Activated CD4-positive, alpha-beta T cell treated with anti-CD3 and anti-CD28 coated beads for 36 hours (primary cell): ENCODE measurements at regions of chr15 and their contacts with region 1.

Region 1: DNA sequence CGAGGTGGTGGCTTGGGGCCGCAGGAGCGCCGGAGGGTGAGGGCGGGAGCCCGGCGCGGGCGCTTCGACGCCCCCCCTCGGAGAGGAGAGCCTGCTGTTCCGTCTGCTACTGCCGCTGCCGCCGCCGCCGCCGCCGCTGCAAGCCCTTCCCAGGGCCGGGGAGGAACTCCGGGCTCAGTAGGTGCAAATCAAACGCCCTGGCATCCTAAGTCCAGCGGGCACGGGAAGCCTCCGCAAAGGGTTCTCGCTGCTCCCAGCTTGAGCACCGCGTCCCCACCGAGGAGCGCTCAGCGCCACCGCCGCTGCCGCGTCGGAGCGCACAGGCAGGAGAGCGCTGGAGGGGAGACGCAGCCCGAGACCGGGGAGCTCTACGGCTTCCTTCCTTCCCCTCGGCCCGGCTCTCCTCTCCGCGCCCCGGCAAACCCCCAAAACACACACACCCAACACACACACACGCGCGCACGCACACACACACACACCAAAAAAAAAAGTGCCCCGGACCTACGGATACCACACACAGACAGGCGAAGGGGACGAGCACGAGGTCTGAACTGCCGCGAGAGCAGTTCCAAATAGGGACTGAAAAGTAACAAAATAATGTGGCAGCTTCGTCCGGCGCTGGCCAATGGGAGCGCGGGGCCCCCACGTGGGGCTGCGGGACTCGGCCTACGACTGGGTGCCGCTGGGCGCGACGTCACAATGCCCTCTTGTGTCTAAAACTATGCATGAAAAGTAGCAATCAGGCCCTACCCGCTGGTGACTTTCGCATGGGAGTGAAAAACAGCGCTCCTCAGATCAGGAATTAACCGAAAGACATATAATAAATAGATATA is at the start of gene TLE3:
- DNase-seq: peak; percentile 99
- ATAC-seq: peak; percentile 68
- H3K4me3 Mint-ChIP-seq: peak within 1 kb of the TSS; percentile 93
- H3K27ac Mint-ChIP-seq: peak within 1 kb of the TSS; percentile 95
- H3K4me1 Mint-ChIP-seq: peaks cover 41% of the 10 kb centered on the region
- H3K27me3 Mint-ChIP-seq: peaks cover 5% of the 10 kb centered on the region
- total RNA-seq, gene TLE3: 89.2 to 97.6 TPM

Region 2: DNA sequence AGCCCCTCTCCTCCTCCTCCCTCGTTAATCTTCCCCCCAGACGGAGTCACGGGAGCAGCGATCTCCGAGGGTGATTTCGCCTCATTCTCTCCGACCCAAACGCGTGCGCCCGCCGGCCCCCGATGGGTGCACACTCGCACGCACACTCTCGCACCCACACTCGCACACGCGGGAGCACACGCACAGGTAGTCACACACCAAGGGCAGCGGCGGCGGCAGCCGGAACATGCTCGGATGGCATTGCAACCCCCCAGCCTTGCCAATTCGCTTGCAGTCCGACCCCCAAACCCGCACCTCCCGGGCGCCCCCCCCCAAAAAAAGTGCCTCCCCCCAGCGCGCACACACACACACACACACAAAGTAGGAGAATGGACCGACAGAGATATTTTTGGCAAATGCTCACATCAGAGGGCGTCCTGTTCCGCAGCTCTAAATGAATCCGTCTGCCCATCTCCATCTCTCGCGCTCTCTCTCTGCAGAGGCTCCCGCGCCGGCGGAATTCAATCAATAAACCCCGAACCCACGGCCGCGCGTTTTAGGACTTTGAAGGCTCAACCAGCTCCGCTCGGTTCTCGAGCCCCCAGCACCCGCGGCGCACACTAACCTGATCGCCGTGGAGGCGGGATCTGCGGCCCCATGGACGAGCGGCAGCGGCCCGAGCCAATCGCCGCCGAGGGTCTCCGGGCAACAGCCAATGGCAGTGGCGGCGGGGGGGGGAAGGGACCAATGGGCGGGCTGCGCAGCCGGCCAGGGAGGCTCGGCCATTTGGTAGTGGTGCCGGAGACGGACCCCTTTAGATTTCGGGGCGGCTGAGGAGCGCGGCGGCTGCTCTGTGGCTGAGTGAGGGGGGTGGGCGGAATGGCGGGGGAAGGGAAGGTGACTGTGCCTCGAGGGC is 1277.0 kb before region 1 on chr15 and contains the start of gene ANP32A:
- CTCF ChIA-PET with region 1: no interaction called
- POLR2A ChIA-PET with region 1: no interaction called
- intact Hi-C with region 1: loop called in 1 of 2 experiments (anchors 5 kb)
- DNase-seq: peak; percentile 98
- ATAC-seq: peak; percentile 76
- H3K4me3 Mint-ChIP-seq: peak within 1 kb of the TSS; percentile 99
- H3K27ac Mint-ChIP-seq: peak within 1 kb of the TSS; percentile 98
- H3K4me1 Mint-ChIP-seq: peaks cover 26% of the 10 kb centered on the region
- H3K27me3 Mint-ChIP-seq: no peaks in the 10 kb centered on the region
- total RNA-seq, gene ANP32A: 252 to 439 TPM

Region 3: GRCh38 chr15:69462493-69463181 is 634.9 kb before region 1 on chr15:
- CTCF ChIA-PET with region 1: interaction called, 3 read pairs
- POLR2A ChIA-PET with region 1: interaction called, 10 read pairs
- intact Hi-C with region 1: loop called in 1 of 2 experiments (anchors 5 kb)
- DNase-seq: peak; percentile 95
- ATAC-seq: peak; percentile 94
- H3K4me3 Mint-ChIP-seq: peak overlapping the region; percentile 82
- H3K27ac Mint-ChIP-seq: peak overlapping the region; percentile 89
- H3K4me1 Mint-ChIP-seq: peaks cover 25% of the 10 kb centered on the region
- H3K27me3 Mint-ChIP-seq: no peaks in the 10 kb centered on the region

Region 4: DNA sequence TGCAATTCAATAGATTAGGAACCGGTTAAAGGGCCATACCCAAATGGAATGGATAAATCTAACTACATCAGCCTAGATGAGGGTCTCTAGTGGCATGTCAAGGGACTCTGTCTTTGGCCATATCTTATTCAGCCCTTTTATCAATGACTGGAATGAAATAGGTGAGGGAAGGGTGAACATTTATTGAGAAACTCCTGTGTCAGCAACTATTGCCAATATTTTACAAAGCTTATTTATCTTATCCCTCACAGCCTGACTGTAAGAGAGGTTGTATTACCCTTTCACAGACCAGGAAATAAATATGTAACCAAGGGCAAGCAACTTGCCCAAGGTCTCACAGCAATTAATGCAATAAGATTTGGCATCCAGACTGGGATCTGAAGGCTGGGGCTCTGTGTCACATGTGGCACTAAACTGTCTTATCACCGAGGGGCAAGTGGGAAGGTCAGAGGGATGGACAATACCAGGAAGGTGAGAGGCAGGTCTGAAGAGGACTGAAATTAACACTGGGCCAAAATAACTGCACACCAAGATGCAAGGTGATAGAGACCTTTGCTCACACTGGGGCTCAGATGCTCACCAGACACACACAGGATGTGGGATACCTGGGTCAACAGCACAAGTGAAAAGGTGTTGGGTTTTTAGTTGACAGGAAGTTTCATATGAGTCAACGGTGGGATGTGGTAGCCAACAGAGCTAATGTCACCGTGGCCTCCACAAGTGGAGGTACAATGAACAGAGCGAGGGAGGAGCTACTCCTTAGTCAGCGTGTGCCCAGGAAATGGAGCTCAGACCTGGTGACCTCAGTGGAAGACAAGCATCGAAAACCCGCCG is 383.6 kb before region 1 on chr15:
- CTCF ChIA-PET with region 1: no interaction called
- POLR2A ChIA-PET with region 1: interaction called, 9 read pairs
- intact Hi-C with region 1: loop called (anchors 1 to 2 kb)
- DNase-seq: peak; percentile 85
- ATAC-seq: peak; percentile 96
- H3K4me3 Mint-ChIP-seq: peak overlapping the region; percentile 21
- H3K27ac Mint-ChIP-seq: peak overlapping the region; percentile 85
- H3K4me1 Mint-ChIP-seq: peaks cover 60% of the 10 kb centered on the region
- H3K27me3 Mint-ChIP-seq: peaks cover 7% of the 10 kb centered on the region

Region 5: DNA sequence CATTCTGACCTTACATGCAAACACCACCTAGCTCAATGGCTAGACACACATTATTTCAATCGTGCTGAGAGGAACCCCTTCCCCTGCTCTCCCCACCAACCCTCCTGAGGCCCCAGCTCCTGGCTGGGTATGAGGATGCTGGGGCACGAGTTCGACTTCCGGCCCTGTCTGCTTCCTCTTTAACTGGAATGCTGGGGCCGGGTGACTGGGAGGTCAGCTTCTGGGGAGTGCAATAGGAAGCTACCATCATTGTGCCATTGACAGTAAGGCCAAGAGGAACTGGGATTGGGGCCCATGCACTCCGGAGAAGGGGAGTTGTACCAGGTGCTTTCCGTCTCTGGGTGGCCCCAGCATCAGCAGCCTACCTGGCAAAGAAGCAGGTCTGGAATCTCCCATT is 15.7 kb after region 1 on chr15:
- CTCF ChIA-PET with region 1: no interaction called
- POLR2A ChIA-PET with region 1: no interaction called
- intact Hi-C with region 1: no loop called
- DNase-seq: no peak
- ATAC-seq: no peak
- H3K4me3 Mint-ChIP-seq: no peak overlapping the region
- H3K27ac Mint-ChIP-seq: no peak overlapping the region
- H3K4me1 Mint-ChIP-seq: no peaks in the 10 kb centered on the region
- H3K27me3 Mint-ChIP-seq: peaks cover 3% of the 10 kb centered on the region

Region 6: GRCh38 chr15:70259028-70259424 is 161.5 kb after region 1 on chr15:
- CTCF ChIA-PET with region 1: no interaction called
- POLR2A ChIA-PET with region 1: interaction called, 3 read pairs
- intact Hi-C with region 1: loop called (anchors 2 to 5 kb)
- DNase-seq: peak; percentile 54
- ATAC-seq: peak; percentile 17
- H3K4me3 Mint-ChIP-seq: peak overlapping the region; percentile 15
- H3K27ac Mint-ChIP-seq: peak overlapping the region; percentile 57
- H3K4me1 Mint-ChIP-seq: peaks cover 32% of the 10 kb centered on the region
- H3K27me3 Mint-ChIP-seq: peaks cover 3% of the 10 kb centered on the region

Region 7: GRCh38 chr15:70545526-70545925 is 448.0 kb after region 1 on chr15:
- CTCF ChIA-PET with region 1: no interaction called
- POLR2A ChIA-PET with region 1: no interaction called
- intact Hi-C with region 1: loop called in 1 of 2 experiments (anchors 1 kb)
- DNase-seq: no peak
- ATAC-seq: no peak
- H3K4me3 Mint-ChIP-seq: no peak overlapping the region
- H3K27ac Mint-ChIP-seq: peak overlapping the region; percentile 84
- H3K4me1 Mint-ChIP-seq: peaks cover 51% of the 10 kb centered on the region
- H3K27me3 Mint-ChIP-seq: no peaks in the 10 kb centered on the region

Region 8: GRCh38 chr15:71151081-71151480 is 1053.5 kb after region 1 on chr15:
- CTCF ChIA-PET with region 1: no interaction called
- POLR2A ChIA-PET with region 1: no interaction called
- intact Hi-C with region 1: no loop called
- DNase-seq: no peak
- ATAC-seq: no peak
- H3K4me3 Mint-ChIP-seq: no peak overlapping the region
- H3K27ac Mint-ChIP-seq: no peak overlapping the region
- H3K4me1 Mint-ChIP-seq: no peaks in the 10 kb centered on the region
- H3K27me3 Mint-ChIP-seq: peaks cover 3% of the 10 kb centered on the region